ENCODE measurements at regions of chr13 and their contacts with region 1.

Region 1: GRCh38 chr13:48595431-48596429 is 58.0 kb upstream of the CYSLTR2 start:
- DNase-seq: peak; percentile 9 to 57 (median 19)
- ATAC-seq: peak; percentile 79
- H3K4me3 ChIP-seq: no peak overlapping the region
- H3K27ac ChIP-seq: no peak overlapping the region
- H3K4me1 ChIP-seq: no peaks in the 10 kb centered on the region
- H3K27me3 ChIP-seq: no peaks in the 10 kb centered on the region
- CTCF ChIP-seq: peak; percentile 60 to 93 (median 91)
- EP300 ChIP-seq: no peak
- POLR2A ChIP-seq: no peak
- RAD21 ChIP-seq: peak; percentile 94 to 95

Region 2: DNA sequence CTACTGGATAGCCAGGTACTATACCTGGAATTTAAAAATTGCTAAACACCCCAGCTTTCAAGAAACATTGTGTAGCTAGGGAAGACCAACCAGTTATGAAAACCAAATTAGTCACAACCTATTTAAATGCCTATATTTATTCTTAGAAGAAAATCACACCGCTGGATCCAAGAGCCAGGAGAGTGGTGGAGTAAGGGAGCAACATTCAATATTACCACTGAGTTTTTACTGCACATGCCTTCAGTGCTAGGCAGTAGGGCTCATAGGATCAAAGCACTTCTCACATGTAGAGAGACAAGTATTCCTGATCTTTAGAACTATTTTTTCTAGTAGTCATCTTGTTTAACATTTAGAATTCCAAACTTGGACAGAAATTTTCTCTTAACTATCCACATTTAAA is 351.6 kb before region 1 on chr13:
- CTCF ChIA-PET with region 1: no interaction called
- POLR2A ChIA-PET with region 1: no interaction called
- in situ Hi-C with region 1: no loop called
- intact Hi-C with region 1: no loop called
- DNase-seq: no peak
- ATAC-seq: peak; percentile 52; the same call in 2 of the 3 replicates
- H3K4me3 ChIP-seq: no peak overlapping the region
- H3K27ac ChIP-seq: no peak overlapping the region
- H3K4me1 ChIP-seq: no peaks in the 10 kb centered on the region
- H3K27me3 ChIP-seq: no peaks in the 10 kb centered on the region
- CTCF ChIP-seq: no peak
- EP300 ChIP-seq: no peak
- POLR2A ChIP-seq: no peak
- RAD21 ChIP-seq: no peak

Region 3: GRCh38 chr13:48334534-48335127 is 261.1 kb before region 1 on chr13:
- CTCF ChIA-PET with region 1: no interaction called
- POLR2A ChIA-PET with region 1: no interaction called
- in situ Hi-C with region 1: loop called (anchors 25 kb)
- intact Hi-C with region 1: no loop called
- DNase-seq: peak in 2 of 4 experiments; percentile 7 to 21
- ATAC-seq: peak; percentile 55; the same call in 1 of the 3 replicates
- H3K4me3 ChIP-seq: no peak overlapping the region
- H3K27ac ChIP-seq: no peak overlapping the region
- H3K4me1 ChIP-seq: no peaks in the 10 kb centered on the region
- H3K27me3 ChIP-seq: no peaks in the 10 kb centered on the region
- CTCF ChIP-seq: peak in 2 of 3 experiments; percentile 40 to 49; a peak in 3 of 6 replicates
- EP300 ChIP-seq: no peak
- POLR2A ChIP-seq: no peak
- RAD21 ChIP-seq: peak in 1 of 2 experiments; percentile 66; a peak in 2 of 4 replicates

Region 4: DNA sequence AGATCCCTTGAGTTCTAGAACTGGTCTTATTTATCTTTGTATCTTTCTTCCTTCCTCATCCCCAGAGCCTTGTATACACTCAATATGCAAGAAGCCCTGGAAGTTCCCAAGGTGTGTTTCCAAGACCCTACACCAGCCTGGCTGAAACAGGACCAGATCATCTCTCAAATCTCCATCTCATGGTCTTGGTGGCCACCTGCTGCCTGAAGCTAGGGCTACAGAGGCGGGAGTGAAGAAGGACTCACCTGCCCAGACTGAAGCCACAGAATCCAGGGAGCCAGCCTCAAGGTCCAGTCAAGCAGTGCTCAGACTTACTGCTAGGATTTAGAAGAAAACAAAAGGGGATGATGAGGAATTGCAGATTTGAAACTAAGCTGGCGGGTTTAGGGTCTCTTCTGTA is 51.9 kb after region 1 on chr13:
- CTCF ChIA-PET with region 1: interaction called, 4 read pairs
- POLR2A ChIA-PET with region 1: interaction called, 3 read pairs
- in situ Hi-C with region 1: no loop called
- intact Hi-C with region 1: loop called (anchors 1 kb)
- DNase-seq: no peak
- ATAC-seq: peak; percentile 51; the same call in 1 of the 3 replicates
- H3K4me3 ChIP-seq: no peak overlapping the region
- H3K27ac ChIP-seq: no peak overlapping the region
- H3K4me1 ChIP-seq: no peaks in the 10 kb centered on the region; a peak in 1 of 5 replicates
- H3K27me3 ChIP-seq: peaks cover 0 to 5% of the 10 kb centered on the region in 2 experiments; a peak in 2 of 5 replicates
- CTCF ChIP-seq: peak; percentile 17 to 39 (median 32); a peak in 4 of 6 replicates
- EP300 ChIP-seq: no peak
- POLR2A ChIP-seq: no peak
- RAD21 ChIP-seq: peak; percentile 25 to 64; a peak in 2 of 4 replicates

Region 5: DNA sequence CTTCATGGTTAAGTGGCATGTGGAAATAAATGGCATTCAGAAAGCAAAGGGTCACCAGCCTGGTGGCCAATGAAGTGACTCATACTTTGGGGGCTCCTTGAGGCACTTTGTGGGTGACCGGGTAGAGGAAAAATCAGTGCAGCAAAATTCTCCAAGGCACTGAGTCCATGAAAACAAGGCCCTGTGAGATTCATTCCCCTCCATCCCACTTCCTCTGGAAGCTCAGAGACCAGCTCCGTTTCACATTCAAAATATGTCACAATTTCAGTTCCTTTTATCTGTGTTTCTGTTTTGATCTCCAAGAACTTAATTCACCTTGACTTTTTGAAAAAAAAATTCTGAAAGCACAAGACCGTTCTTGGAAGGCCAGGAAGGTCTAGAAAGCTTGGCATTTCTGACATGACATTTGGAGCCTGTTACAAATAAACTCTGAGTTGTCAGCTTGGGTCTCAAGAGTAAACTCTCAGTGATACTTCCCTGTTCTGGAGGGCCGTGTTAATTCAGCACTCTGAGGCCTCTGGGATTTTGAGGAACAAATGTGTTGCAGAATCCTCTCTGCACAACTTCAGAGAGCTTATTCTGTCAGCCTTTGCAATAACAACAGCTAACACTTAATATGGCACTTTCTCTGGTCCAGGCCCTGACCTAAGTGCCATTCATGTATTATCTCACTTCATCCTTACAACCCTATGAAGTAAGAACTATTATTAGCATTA is 64.8 kb after region 1 on chr13:
- CTCF ChIA-PET with region 1: no interaction called
- POLR2A ChIA-PET with region 1: no interaction called
- in situ Hi-C with region 1: no loop called
- intact Hi-C with region 1: no loop called
- DNase-seq: no peak
- ATAC-seq: no peak
- H3K4me3 ChIP-seq: no peak overlapping the region
- H3K27ac ChIP-seq: no peak overlapping the region
- H3K4me1 ChIP-seq: no peaks in the 10 kb centered on the region
- H3K27me3 ChIP-seq: no peaks in the 10 kb centered on the region
- CTCF ChIP-seq: no peak
- EP300 ChIP-seq: no peak
- POLR2A ChIP-seq: no peak
- RAD21 ChIP-seq: no peak

Region 6: DNA sequence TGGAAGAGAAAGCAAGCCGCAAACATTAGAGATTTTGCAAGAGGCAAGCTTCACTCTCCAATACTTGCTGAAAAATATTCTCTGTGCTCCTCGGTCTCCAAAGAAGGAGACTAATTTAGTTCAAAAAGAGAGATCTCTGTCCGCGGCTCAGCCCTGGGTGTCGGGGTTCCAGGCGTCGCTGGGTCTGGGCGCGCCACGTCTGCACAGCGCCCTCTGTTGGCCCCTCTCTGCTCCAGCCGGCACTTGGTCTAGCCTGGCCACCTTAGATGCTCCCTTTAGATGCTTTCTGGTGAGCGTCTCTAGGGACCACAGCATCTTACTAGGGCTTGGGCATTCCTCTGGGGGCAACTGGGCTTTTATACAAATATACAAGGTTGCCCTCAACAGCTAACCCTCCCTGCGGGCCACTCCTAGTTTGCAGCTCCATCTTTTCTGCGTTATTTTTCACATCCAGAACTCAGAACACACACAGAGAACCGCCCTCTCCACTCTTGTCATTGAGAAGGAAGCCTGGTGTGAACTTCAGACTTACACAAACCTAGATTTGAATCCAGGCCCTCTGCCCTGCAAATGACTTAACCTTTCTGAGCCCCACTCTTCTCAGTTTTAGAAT is 136.3 kb after region 1 on chr13:
- CTCF ChIA-PET with region 1: interaction called, 6 read pairs
- POLR2A ChIA-PET with region 1: no interaction called
- in situ Hi-C with region 1: no loop called
- intact Hi-C with region 1: loop called (anchors 1 kb)
- DNase-seq: peak; percentile 44 to 57 (median 52)
- ATAC-seq: peak; percentile 99
- H3K4me3 ChIP-seq: no peak overlapping the region
- H3K27ac ChIP-seq: no peak overlapping the region
- H3K4me1 ChIP-seq: peaks cover 2 to 3% of the 10 kb centered on the region in 2 experiments; a peak in 4 of 5 replicates
- H3K27me3 ChIP-seq: no peaks in the 10 kb centered on the region; a peak in 1 of 5 replicates
- CTCF ChIP-seq: peak; percentile 70 to 83 (median 78)
- EP300 ChIP-seq: no peak
- POLR2A ChIP-seq: no peak
- RAD21 ChIP-seq: peak; percentile 52 to 74

Region 7: DNA sequence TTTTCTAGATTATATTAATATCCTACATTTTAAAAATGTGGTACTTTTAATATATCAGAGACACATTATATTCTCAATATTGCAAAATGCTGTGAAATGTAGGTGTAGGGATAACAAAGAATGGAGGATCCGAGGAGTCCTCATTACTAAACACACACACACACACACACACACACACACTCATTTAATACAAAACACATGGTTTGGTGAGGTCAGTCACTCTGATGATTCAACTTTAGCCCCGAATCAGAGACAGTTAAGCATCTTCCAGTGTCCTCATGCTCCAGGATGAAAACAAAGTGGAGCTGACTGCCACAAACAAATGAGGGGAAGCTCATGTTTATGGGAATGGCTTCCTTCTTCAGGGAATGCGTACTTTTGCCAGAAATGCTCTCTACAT is 205.5 kb after region 1 on chr13:
- CTCF ChIA-PET with region 1: no interaction called
- POLR2A ChIA-PET with region 1: no interaction called
- in situ Hi-C with region 1: no loop called
- intact Hi-C with region 1: no loop called
- DNase-seq: no peak
- ATAC-seq: no peak
- H3K4me3 ChIP-seq: no peak overlapping the region
- H3K27ac ChIP-seq: no peak overlapping the region
- H3K4me1 ChIP-seq: no peaks in the 10 kb centered on the region
- H3K27me3 ChIP-seq: no peaks in the 10 kb centered on the region
- CTCF ChIP-seq: no peak
- EP300 ChIP-seq: no peak
- POLR2A ChIP-seq: no peak
- RAD21 ChIP-seq: no peak

Region 8: DNA sequence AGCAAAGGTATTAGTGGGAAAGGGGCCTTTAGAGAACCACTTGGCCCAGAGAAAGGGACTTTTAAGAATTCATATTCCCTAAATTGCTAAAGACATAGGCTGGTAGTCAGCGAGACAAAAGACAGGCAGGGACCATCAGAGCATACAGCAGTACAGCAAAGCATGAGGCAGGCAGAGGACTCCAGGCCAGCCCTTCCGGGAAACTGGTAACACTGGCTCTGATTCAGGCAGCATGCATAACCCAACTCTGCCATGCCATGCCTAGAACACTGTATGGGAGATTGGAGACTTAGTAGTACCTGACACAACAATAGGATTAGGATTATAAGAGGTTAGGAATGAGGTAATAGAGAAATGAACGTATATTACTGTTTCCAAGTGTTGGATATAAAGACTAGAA is 813.3 kb after region 1 on chr13:
- CTCF ChIA-PET with region 1: no interaction called
- POLR2A ChIA-PET with region 1: no interaction called
- in situ Hi-C with region 1: no loop called
- intact Hi-C with region 1: no loop called
- DNase-seq: no peak
- ATAC-seq: peak; percentile 50; the same call in 2 of the 3 replicates
- H3K4me3 ChIP-seq: no peak overlapping the region
- H3K27ac ChIP-seq: no peak overlapping the region
- H3K4me1 ChIP-seq: no peaks in the 10 kb centered on the region
- H3K27me3 ChIP-seq: no peaks in the 10 kb centered on the region
- CTCF ChIP-seq: no peak
- EP300 ChIP-seq: no peak
- POLR2A ChIP-seq: no peak
- RAD21 ChIP-seq: no peak